ENCODE measurements at regions of chr7 and their contacts with region 1.

Region 1: DNA sequence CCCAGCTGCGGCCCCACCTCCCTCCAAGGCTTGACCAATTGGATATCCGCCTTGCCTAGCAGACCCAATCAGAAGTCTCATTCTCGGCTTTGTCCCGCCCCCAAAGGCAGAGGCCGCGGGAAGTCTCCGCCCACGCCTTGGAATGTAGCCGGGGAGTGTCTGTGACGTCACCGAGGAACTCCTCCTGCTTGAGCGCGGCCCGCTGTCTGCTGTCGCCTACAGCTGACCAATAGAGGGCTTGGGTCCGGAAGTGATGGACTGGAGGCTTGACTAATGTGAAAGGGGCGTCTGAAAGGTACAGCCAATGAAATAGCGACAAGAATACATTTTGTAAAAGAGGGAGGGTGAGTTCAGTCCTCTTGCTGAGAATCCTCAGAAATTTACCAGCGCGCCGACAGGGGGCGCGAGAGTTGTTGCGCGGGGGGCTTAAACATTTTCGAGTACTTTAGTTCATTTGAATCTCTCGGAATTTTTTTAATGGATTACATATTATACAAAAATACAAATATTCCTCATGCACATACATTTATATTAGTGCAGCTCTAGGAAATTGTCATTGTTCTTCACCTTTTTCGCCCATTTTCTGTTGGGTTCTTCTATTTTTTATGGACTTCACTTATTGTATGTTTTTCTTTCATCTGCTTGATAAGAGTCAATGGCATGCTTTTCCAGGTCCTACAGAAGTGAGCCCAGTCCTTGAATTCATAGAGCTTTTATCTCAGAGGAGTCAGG is 376 bp upstream of the CREB3L2 start:
- DNase-seq: peak; percentile 98 to 99
- ATAC-seq: peak; percentile 93

Region 2: DNA sequence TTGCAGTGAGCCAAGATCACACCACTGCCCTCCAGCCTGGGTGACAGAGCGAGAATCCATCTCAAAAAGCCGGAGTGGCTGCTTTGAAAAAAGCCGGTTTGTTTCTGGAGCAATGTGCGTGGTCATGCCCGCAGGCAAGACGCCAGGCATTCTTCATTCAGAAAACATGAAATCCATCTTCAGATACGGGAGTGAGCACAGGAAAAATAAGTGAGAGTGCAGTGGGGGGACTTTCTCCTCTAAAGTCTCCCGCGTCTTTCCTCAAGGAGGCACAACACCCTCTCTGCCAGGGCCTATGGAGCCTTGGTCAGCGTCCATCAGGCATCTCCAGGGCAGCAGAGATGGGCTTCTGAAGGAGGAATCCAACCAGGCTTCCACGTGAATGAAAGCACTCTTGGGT is 93.2 kb before region 1 on chr7:
- intact Hi-C with region 1: loop called in 1 of 2 experiments (anchors 5 kb)
- DNase-seq: no peak
- ATAC-seq: no peak

Region 3: GRCh38 chr7:139035586-139036353 is 1033.5 kb after region 1 on chr7 and contains the start of gene ZC3HAV1L:
- intact Hi-C with region 1: no loop called
- DNase-seq: peak; percentile 51 to 67
- ATAC-seq: peak; percentile 84
- total RNA-seq, gene ZC3HAV1L: 6.3 to 7.0 TPM